Naive thymus-derived CD8-positive, alpha-beta T cell (primary cell): ENCODE measurements at regions of chr7 and their contacts with region 1.

Region 1: GRCh38 chr7:140230861-140231770 is 54.3 kb upstream of the KDM7A start:
- DNase-seq: peak; percentile 36 to 80 (median 50)
- ATAC-seq: peak; percentile 23 to 24
- H3K4me3 Mint-ChIP-seq: peak overlapping the region; percentile 93 to 98 (median 96)
- H3K27ac Mint-ChIP-seq: peak overlapping the region; percentile 96 to 100 (median 99)
- H3K4me1 Mint-ChIP-seq: peaks cover 21 to 59% (median 48%) of the 10 kb centered on the region in 4 donors
- H3K27me3 Mint-ChIP-seq: no peaks in the 10 kb centered on the region

Region 2: GRCh38 chr7:139317939-139318505 is 913.1 kb before region 1 on chr7:
- POLR2A ChIA-PET with region 1: no interaction called
- DNase-seq: no peak
- ATAC-seq: no peak
- H3K4me3 Mint-ChIP-seq: no peak overlapping the region
- H3K27ac Mint-ChIP-seq: no peak overlapping the region
- H3K4me1 Mint-ChIP-seq: no peaks in the 10 kb centered on the region
- H3K27me3 Mint-ChIP-seq: peaks cover 0 to 3% (median 0%) of the 10 kb centered on the region in 5 donors

Region 3: DNA sequence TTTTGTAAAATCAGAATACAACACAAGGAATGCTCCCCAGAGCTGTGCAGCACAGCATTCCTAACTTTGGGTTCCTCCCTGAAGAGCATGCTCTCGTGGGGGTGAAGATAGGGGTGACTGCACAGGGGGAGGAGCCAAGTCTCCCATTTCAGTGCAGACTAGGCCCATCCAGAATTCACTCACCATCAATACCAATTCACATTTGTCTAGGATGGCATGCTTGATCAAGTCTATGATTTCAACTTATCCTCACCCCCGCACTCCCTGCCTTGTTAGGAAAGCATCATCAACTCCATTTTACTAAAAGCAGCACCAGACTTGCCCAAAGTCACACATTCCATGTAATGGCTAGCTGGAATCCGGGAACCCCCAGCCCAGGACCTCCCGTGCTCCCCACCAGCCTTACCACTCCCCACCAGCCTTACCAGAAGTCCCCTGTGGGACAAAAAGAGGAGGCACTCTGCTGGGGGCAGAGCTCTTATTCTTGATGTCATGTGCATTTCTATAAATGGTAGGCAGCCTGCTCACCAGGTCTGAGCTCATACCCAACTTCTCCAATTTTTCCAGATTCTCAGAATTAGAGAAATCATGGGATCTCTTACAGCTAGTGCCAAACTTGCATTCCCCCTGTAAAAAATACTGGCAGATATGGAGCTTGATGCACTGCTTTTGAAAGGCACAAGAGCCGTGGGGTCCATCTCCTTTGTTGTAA is 174.5 kb before region 1 on chr7:
- POLR2A ChIA-PET with region 1: no interaction called
- DNase-seq: no peak
- ATAC-seq: no peak
- H3K4me3 Mint-ChIP-seq: no peak overlapping the region
- H3K27ac Mint-ChIP-seq: peak overlapping the region in 3 of 10 donors; percentile 9 to 54 (median 40)
- H3K4me1 Mint-ChIP-seq: peaks cover 32 to 89% (median 75%) of the 10 kb centered on the region in 4 donors
- H3K27me3 Mint-ChIP-seq: no peaks in the 10 kb centered on the region

Region 4: GRCh38 chr7:140136073-140136472 is 95.0 kb before region 1 on chr7:
- POLR2A ChIA-PET with region 1: no interaction called
- DNase-seq: no peak
- ATAC-seq: no peak
- H3K4me3 Mint-ChIP-seq: no peak overlapping the region
- H3K27ac Mint-ChIP-seq: peak overlapping the region in 2 of 10 donors; percentile 19 to 69
- H3K4me1 Mint-ChIP-seq: peaks cover 15 to 34% (median 20%) of the 10 kb centered on the region in 4 donors
- H3K27me3 Mint-ChIP-seq: no peaks in the 10 kb centered on the region

Region 5: DNA sequence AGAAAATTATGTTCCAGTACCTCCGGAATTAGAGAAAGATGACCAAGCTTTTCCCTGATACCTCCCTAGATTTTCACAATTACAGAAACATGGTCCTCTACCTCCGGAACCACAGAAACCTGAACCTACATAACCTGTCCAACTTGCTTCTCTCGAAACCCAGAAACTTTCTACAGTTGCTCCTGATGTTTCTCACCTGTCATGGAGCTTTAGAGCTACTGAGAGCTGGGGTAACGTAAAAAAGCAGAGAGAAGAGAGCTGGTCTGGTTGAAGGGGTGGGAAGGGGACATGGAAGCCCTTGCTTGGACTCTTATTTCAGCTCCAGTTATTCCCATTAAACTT is 11.0 kb before region 1 on chr7:
- POLR2A ChIA-PET with region 1: interaction called, 20 read pairs
- DNase-seq: no peak
- ATAC-seq: no peak
- H3K4me3 Mint-ChIP-seq: no peak overlapping the region
- H3K27ac Mint-ChIP-seq: no peak overlapping the region
- H3K4me1 Mint-ChIP-seq: peaks cover 18 to 37% (median 27%) of the 10 kb centered on the region in 4 donors
- H3K27me3 Mint-ChIP-seq: no peaks in the 10 kb centered on the region

Region 6: GRCh38 chr7:140260352-140261104 is 29.4 kb after region 1 on chr7:
- POLR2A ChIA-PET with region 1: interaction called, 91 read pairs
- DNase-seq: no peak
- ATAC-seq: no peak
- H3K4me3 Mint-ChIP-seq: peak overlapping the region in 2 of 10 donors; percentile 10 to 34
- H3K27ac Mint-ChIP-seq: peak overlapping the region in 9 of 10 donors; percentile 6 to 95 (median 82)
- H3K4me1 Mint-ChIP-seq: peaks cover 34 to 58% (median 55%) of the 10 kb centered on the region in 4 donors
- H3K27me3 Mint-ChIP-seq: no peaks in the 10 kb centered on the region

Region 7: DNA sequence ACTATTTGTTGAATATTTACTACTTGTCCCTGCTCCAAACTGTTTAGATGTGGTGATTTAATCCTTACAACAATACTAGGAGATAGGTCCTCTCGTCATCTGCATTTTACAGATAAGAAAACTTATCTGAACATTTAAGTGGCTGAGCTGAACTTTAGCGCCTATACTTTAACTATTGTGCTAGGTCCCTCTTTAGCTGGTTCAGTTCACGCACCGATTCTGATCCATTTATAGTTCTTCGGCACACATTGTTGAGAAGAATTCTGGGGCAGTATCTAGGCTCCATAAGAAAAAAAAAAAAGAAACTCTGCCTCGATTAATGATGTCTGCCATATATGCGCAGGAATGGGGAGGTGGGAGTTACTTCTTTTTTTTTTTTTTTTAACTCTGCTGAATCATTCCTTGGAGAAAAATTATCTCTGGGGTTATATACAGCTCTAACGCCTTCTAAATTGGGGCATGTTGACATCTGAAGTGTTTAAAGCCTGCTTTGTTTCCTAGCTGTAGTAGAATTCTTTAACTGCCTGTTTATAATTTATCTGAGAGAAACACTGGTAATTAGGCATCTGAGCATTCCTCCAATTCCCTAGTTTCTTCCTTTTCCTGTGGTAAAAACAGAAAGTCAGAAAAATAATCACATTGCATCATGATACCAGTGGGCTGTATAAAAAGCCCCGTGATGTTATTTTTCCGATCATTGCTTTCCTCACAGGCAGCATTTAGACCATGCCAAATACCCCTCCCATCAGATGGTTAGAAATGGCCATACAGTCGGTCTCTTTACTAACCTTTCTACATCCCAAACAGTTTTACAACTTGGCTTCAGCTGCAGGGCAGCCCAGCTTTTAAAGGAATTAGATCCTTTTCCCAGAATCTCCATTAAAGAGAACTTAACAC is 44.2 kb after region 1 on chr7:
- POLR2A ChIA-PET with region 1: interaction called, 29 read pairs
- DNase-seq: no peak
- ATAC-seq: no peak
- H3K4me3 Mint-ChIP-seq: no peak overlapping the region
- H3K27ac Mint-ChIP-seq: peak overlapping the region in 1 of 10 donors; percentile 58
- H3K4me1 Mint-ChIP-seq: peaks cover 0 to 7% (median 3%) of the 10 kb centered on the region in 4 donors
- H3K27me3 Mint-ChIP-seq: no peaks in the 10 kb centered on the region

Region 8: GRCh38 chr7:140304191-140304799 is 73.2 kb after region 1 on chr7:
- POLR2A ChIA-PET with region 1: interaction called, 35 read pairs
- DNase-seq: peak in 9 of 10 donors; percentile 35 to 80 (median 62)
- ATAC-seq: peak; percentile 99 to 100
- H3K4me3 Mint-ChIP-seq: no peak overlapping the region
- H3K27ac Mint-ChIP-seq: peak overlapping the region in 9 of 10 donors; percentile 33 to 91 (median 82)
- H3K4me1 Mint-ChIP-seq: peaks cover 4 to 11% (median 8%) of the 10 kb centered on the region in 4 donors
- H3K27me3 Mint-ChIP-seq: peaks cover 0 to under 1% (median 0%) of the 10 kb centered on the region in 5 donors

Region 9: DNA sequence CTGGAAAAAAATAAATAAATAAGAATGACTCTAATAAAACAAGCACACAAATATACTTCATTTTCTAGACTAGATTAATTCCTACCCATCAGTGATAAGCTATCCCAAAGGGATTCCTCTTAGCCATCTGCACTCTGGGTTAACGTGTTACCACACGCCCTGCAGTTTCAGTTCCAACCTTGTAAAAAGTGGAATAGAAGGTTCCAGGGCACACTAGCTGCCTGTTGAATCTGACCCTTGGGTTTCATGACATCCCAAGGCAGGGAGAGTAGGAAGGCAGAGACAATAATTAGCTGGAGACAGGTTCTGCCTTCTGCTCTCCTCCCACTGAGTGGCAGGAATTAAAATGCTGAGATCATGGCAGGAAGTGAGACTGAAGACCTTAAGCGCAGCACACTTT is 133.7 kb after region 1 on chr7:
- POLR2A ChIA-PET with region 1: no interaction called
- DNase-seq: no peak
- ATAC-seq: no peak
- H3K4me3 Mint-ChIP-seq: no peak overlapping the region
- H3K27ac Mint-ChIP-seq: peak overlapping the region in 1 of 10 donors; percentile 43
- H3K4me1 Mint-ChIP-seq: peaks cover under 1 to 7% (median 4%) of the 10 kb centered on the region in 4 donors
- H3K27me3 Mint-ChIP-seq: no peaks in the 10 kb centered on the region